ENCODE measurements at regions of chr1 and their contacts with region 1.

Region 1: DNA sequence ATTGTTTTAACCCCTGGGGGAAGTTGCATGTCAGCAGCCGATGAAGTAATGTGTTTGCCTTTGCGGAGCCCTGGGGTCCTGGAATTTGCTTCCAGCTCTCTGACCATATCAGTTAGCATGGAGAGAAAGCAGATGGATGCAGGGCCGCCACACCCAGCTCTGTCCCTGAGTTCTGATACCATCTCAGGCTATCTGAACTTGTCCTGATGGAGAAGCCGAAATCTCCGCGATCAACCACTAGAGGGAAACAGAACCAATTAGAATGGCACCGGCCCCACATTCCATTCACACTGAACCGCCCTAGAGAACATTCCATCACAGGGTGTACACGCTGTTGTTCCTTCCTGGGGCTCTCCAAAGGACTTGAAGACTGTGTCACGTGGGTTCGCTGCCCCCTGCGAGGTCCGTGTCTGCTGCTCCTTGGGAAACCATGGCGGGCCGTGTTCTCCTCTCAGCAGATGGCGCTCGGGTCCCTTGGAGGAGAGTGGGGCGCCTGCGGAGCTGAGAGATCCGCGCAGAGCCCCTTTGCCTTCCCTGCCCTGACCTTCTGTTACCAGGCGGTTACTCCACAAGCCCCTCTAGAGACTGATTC is 75.4 kb downstream of the ABCA4 start:
- DNase-seq: peak; percentile 34 to 94
- H3K4me3 ChIP-seq: peak overlapping the region in 1 of 2 donors; percentile 48
- H3K27ac ChIP-seq: peak overlapping the region; percentile 70
- H3K4me1 ChIP-seq: peaks cover 5 to 41% of the 10 kb centered on the region in 2 donors
- H3K27me3 ChIP-seq: no peaks in the 10 kb centered on the region
- CTCF ChIP-seq: peak; percentile 61 to 75 (median 67)

Region 2: GRCh38 chr1:94061513-94062443 is 16.2 kb after region 1 on chr1:
- intact Hi-C with region 1: loop called (anchors 2 kb)
- DNase-seq: peak in 1 of 2 donors; percentile 85
- H3K4me3 ChIP-seq: no peak overlapping the region
- H3K27ac ChIP-seq: peak overlapping the region in 1 of 2 donors; percentile 18
- H3K4me1 ChIP-seq: peaks cover 0 to 6% of the 10 kb centered on the region in 2 donors
- H3K27me3 ChIP-seq: no peaks in the 10 kb centered on the region
- CTCF ChIP-seq: peak; percentile 84 to 93 (median 86)

Region 3: GRCh38 chr1:94095112-94095637 is 49.6 kb after region 1 on chr1:
- intact Hi-C with region 1: loop called (anchors 2 kb)
- DNase-seq: peak in 1 of 2 donors; percentile 83
- H3K4me3 ChIP-seq: peak overlapping the region in 1 of 2 donors; percentile 16
- H3K27ac ChIP-seq: peak overlapping the region; percentile 63 to 79
- H3K4me1 ChIP-seq: peaks cover 10 to 29% of the 10 kb centered on the region in 2 donors
- H3K27me3 ChIP-seq: no peaks in the 10 kb centered on the region
- CTCF ChIP-seq: no peak

Region 4: DNA sequence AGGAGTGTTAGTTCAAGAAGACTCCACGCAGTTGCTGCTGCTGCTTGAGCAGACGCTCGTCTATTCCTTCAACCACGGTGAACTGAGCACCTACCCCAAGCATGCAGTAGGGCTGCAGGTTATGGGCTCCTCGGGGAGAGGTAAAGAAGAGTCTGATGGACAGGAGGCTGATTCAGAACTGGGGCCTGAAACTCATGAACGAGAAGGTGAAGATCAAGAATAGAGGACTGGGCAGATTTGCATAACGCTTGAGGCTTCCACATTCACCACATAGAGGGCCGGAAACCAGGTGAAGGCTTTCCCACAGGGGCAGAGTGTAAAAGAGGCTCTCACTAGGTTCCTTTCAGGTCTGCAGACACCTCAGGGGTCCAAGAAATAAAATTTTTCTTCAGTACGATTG is 66.3 kb after region 1 on chr1:
- intact Hi-C with region 1: no loop called
- DNase-seq: no peak
- H3K4me3 ChIP-seq: no peak overlapping the region
- H3K27ac ChIP-seq: no peak overlapping the region
- H3K4me1 ChIP-seq: no peaks in the 10 kb centered on the region
- H3K27me3 ChIP-seq: no peaks in the 10 kb centered on the region
- CTCF ChIP-seq: no peak

Region 5: DNA sequence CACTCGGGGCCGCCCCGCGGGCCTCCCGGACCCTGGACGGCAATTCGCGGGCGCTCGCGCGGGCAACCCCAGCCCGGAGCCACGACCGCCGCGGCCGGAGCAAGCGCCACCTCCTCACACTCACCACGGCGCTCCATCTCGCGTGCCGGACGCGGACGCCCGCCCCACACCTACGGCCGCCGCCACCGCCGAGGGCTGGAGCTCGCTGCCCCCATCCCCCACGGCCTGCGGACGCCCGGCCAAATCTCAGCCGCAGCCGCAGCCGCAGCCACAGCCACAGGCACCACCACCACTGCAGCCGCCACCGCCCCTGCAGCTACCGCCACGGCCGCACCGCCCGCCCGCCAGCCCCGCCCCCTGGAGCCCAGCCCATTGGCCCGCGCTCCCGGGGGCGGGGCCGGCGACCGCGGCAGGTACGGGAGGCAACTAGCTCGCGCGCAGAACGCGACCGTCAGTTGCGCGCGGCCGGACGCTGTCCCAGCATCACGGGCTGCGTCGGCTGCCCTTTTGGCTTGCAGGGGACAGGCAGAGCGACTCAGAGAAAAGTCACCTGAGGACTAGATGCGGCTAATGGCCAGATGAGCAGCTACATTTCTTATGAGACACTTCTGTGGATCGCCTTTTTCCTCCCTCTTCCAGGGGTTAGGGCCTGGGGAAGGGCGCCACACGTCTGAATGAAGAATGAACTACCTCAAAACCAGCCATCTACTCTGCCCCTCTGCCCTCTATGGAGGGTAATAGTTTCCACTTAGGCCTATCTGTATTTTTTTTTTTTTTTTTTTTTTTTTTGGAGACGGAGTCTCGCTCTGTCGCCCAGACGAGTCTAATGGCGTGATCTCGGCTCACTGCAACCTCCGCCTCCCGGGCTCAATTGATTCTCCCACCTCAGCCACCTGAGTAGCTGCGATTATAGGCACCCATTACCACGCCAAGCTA is 192.0 kb after region 1 on chr1 and contains the start of gene ARHGAP29:
- intact Hi-C with region 1: loop called (anchors 5 kb)
- DNase-seq: peak; percentile 14 to 86
- H3K4me3 ChIP-seq: peak within 1 kb of the TSS; percentile 63 to 90
- H3K27ac ChIP-seq: peak within 1 kb of the TSS; percentile 81 to 86
- H3K4me1 ChIP-seq: no peaks in the 10 kb centered on the region
- H3K27me3 ChIP-seq: no peaks in the 10 kb centered on the region
- CTCF ChIP-seq: no peak
- total RNA-seq, gene ARHGAP29: 35.1 TPM

Region 6: GRCh38 chr1:94329986-94330385 is 284.4 kb after region 1 on chr1:
- intact Hi-C with region 1: loop called (anchors 2 kb)
- DNase-seq: no peak
- H3K4me3 ChIP-seq: no peak overlapping the region
- H3K27ac ChIP-seq: no peak overlapping the region
- H3K4me1 ChIP-seq: peaks cover 0 to 14% of the 10 kb centered on the region in 2 donors
- H3K27me3 ChIP-seq: no peaks in the 10 kb centered on the region
- CTCF ChIP-seq: peak; percentile 48 to 57 (median 49)

Region 7: DNA sequence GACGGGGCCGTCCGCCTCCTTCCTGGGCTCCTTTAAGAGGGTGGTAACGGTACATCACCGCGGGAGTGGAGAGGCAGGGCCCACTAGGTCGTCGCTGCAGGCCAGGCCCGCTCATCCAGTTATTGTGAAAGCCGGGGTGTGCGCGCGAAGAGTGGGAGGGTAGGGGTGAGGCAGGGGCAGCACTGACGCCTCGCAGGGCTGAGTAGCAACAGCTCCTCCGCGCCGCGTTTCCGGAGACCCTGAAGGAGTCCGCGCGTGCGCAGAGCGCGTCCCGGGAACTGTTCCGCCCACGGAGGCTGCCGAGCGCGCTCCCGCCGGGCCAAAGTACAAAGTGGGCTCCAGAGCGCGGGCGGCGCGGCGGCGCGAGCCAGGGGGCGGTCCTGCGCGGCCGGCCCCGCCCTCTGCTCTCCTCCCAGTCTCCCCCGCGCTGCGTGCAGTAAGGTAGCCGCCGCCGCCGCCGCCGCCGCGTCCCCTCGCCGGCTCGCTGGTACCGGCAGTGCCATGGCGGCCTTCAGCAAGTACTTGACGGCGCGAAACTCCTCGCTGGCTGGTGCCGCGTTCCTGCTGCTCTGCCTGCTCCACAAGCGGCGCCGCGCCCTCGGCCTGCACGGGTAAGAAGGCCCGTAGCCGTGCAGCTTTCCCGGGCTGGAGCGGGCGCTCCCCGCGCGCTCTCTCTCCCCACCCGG is 372.6 kb after region 1 on chr1 and contains the start of gene ABCD3:
- intact Hi-C with region 1: loop called (anchors 5 kb)
- DNase-seq: peak; percentile 90 to 99
- H3K4me3 ChIP-seq: peak within 1 kb of the TSS; percentile 86 to 94
- H3K27ac ChIP-seq: peak within 1 kb of the TSS; percentile 86 to 90
- H3K4me1 ChIP-seq: peaks cover 0 to 11% of the 10 kb centered on the region in 2 donors
- H3K27me3 ChIP-seq: no peaks in the 10 kb centered on the region
- CTCF ChIP-seq: no peak
- total RNA-seq, gene ABCD3: 8.8 TPM